Activated CD4-positive, alpha-beta T cell treated with anti-CD3 and anti-CD28 coated beads for 36 hours (primary cell): ENCODE measurements at regions of chr3 and their contacts with region 1.

Region 1: DNA sequence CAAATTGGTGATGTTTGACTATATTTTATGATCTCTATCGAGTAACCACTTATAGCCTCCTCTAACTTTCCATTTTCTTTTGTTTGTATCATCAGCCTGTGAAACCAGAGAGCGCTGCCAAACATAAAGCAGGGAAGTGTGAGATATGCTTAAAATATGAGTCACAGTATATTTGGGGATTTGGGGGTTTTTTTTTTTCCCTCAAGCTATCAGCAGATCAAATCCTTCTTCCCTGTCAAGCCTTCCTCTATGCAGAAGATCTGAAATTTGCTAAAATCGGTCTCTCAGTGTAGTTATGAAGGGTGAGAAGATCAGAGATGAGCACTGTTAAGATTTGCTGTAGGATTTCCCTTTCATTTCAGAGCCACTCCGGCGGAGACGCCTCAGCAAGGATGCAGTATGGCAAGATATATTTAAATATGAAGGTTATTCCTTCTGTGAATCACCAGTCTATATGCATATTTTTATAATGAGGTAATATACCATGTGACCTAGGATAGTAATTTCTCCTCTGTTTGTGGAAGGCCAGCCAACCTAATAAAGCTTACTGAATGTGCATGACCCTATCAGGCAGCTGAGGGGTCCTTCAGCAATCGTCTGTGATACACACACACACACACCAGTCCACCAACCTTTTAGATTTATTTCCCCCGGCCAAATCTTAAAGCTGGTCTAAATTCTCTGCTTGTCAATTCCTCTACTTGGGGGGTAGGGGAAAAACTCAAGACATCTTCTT is 474.1 kb downstream of the FOXP1 start:
- DNase-seq: peak; percentile 44
- ATAC-seq: peak; percentile 49
- H3K4me3 Mint-ChIP-seq: peak overlapping the region; percentile 7
- H3K27ac Mint-ChIP-seq: peak overlapping the region; percentile 71
- H3K4me1 Mint-ChIP-seq: peaks cover 95% of the 10 kb centered on the region
- H3K27me3 Mint-ChIP-seq: no peaks in the 10 kb centered on the region

Region 2: DNA sequence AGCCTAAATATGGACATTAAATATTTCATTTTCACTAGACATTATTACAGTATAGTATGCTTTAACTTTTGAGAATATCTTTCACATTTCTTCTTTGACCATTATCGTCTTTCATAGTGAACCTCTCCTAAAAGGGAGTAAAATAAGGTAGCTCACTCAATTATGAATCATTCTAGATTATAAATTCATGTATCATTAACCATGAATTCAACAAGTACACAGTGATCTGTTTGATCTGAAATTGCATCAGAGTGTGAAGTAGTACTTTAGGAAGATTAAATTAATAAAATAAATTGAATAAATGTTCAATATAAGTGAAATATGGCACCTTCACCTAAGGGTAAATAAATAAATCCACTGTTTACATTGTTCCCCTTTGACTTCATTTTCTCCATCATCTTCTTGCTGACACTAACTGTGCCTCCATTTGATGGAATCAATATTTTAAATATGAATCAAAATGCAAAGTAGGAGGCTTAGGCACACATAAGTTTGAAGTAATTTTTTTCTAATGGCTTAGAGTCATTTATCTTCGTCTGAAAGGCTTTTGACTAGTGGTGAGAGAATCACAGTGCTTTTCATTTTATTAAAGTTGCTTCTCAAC is 622.9 kb before region 1 on chr3:
- CTCF ChIA-PET with region 1: no interaction called
- POLR2A ChIA-PET with region 1: no interaction called
- intact Hi-C with region 1: no loop called
- DNase-seq: no peak
- ATAC-seq: no peak
- H3K4me3 Mint-ChIP-seq: no peak overlapping the region
- H3K27ac Mint-ChIP-seq: no peak overlapping the region
- H3K4me1 Mint-ChIP-seq: no peaks in the 10 kb centered on the region
- H3K27me3 Mint-ChIP-seq: peaks cover 14% of the 10 kb centered on the region

Region 3: GRCh38 chr3:71121429-71122167 is 12.2 kb after region 1 on chr3:
- CTCF ChIA-PET with region 1: interaction called, 10 read pairs
- POLR2A ChIA-PET with region 1: no interaction called
- intact Hi-C with region 1: loop called in 1 of 2 experiments (anchors 2 kb)
- DNase-seq: peak; percentile 52
- ATAC-seq: peak; percentile 57
- H3K4me3 Mint-ChIP-seq: no peak overlapping the region
- H3K27ac Mint-ChIP-seq: peak overlapping the region; percentile 65
- H3K4me1 Mint-ChIP-seq: peaks cover 90% of the 10 kb centered on the region
- H3K27me3 Mint-ChIP-seq: no peaks in the 10 kb centered on the region